ENCODE measurements at regions of chr4 and their contacts with region 1.

Region 1: DNA sequence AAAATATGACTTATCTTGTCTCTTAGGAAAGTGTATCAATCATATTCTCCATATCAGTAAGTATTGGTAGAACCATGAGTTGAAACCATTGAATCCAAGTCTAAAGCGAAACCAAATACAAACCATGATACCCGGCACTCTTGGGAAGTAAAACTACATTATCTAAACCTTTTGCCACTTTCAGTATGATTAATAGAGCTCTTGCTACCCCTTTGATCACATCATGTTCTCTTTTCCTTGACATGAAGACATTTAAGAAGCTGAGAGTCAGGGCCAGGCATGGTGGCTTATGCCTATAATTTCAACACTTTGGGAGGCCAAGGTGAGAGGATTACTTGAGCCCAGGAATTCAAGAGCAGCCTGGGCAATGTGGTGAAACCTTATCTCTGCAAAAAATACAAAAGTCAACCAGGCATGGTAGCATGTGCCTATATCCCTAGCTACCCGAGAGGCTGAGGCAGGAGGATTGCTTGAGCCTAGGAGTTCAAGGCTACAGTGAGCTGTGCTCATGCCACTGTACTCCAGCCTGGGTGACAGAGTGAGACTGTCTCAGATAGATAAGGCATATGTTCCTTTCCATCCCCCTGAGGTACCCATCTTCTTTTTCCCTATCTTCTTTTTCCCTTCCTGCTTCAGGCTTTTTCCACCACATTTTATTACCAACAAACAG is 45.4 kb downstream of the CEP135 start:
- DNase-seq: peak; percentile 36
- H3K4me3 Mint-ChIP-seq: no peak overlapping the region
- H3K27ac Mint-ChIP-seq: peak overlapping the region; percentile 41
- H3K4me1 Mint-ChIP-seq: peaks cover 33% of the 10 kb centered on the region
- H3K27me3 Mint-ChIP-seq: no peaks in the 10 kb centered on the region

Region 2: DNA sequence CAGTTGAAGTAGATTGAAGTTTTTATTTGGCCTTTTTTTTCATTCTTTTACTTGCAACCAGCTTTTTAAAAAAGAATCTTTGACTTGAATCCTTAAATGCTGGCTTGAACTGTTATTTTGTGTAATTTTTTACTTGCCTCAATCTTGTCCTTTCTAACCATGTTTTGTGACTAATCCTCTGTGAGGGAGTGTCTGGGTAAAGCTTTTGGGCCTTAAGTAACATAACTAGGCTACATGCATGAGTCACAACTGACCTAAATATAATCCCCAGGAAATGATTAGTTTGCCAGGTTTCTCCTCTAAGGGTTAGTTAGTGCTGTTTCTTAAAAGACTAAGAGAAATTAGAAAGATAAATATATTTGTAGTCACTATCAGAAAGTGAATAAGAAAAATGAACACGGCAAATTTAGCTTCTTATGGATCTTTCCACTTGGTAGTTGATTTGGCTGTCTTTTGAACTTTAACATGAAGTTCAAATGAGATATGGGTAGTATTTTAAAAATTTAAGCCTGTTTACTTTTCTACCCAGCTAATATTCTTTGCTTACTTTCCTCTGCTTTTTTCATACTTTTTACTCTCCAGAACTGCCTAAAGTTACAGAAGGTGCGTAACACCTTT is 127.7 kb before region 1 on chr4:
- CTCF ChIA-PET with region 1: no interaction called
- intact Hi-C with region 1: no loop called
- DNase-seq: no peak
- H3K4me3 Mint-ChIP-seq: no peak overlapping the region
- H3K27ac Mint-ChIP-seq: peak overlapping the region; percentile 78
- H3K4me1 Mint-ChIP-seq: peaks cover 16% of the 10 kb centered on the region
- H3K27me3 Mint-ChIP-seq: no peaks in the 10 kb centered on the region

Region 3: DNA sequence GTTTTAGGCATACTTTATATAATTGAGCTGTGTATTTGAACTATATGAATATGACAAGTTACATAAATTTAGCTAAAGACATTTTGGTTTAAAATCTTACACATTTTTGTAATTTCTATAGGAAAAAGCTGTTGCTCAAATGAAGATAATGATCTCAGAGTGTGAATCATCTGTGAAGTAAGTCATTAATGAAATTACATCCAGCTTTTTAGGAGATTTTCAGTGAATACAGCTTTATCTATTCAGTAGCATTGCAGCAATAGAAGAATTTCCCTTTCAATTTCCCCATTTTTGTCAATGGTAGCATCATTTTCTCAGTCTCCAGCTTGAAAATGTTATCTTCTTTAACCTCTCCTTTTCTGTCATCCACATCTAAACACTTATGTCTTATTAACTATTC is 14.1 kb after region 1 on chr4:
- CTCF ChIA-PET with region 1: interaction called, 5 read pairs
- intact Hi-C with region 1: loop called (anchors 1 kb)
- DNase-seq: no peak
- H3K4me3 Mint-ChIP-seq: no peak overlapping the region
- H3K27ac Mint-ChIP-seq: no peak overlapping the region
- H3K4me1 Mint-ChIP-seq: peaks cover 10% of the 10 kb centered on the region
- H3K27me3 Mint-ChIP-seq: no peaks in the 10 kb centered on the region

Region 4: DNA sequence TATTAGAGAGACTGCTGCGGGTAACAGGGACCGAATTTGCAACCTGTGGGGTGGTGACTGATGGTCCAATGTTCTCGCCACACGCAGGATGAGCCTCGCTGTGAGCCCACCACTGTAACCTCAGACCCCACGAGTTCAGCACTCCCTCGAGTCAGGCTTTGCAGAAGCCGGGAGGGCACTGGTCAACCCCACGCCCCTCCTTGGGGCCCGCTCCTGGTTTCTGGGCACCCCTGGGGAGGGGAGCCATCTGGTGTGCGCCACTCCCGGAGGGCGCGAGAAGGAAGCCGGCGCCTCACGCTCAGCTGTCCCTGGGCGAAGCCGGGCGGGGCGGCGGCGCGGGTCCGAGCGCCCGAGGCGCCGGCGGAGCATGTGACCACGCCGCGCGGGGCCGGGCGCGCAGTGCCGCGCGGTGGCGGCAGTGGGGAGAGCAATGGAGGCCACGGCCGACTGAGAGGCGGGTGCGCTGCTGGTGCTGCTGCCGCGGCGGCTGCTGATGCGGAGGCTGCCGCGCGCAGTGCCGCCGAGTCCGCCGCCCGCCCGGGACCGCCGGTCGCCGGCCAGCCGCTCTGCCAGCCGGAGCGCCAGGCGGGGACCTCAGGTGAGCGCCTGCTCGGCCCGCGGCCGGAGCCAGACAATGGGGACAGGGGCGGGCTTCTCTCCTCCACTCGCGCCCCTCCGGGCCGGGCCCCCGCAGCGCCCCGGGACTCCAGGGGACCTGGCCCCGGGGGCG is 54.7 kb after region 1 on chr4:
- CTCF ChIA-PET with region 1: no interaction called
- intact Hi-C with region 1: loop called (anchors 2 kb)
- DNase-seq: peak; percentile 66
- H3K4me3 Mint-ChIP-seq: peak overlapping the region; percentile 70
- H3K27ac Mint-ChIP-seq: no peak overlapping the region
- H3K4me1 Mint-ChIP-seq: peaks cover 9% of the 10 kb centered on the region
- H3K27me3 Mint-ChIP-seq: peaks cover 46% of the 10 kb centered on the region

Region 5: GRCh38 chr4:56129431-56129861 is 135.3 kb after region 1 on chr4:
- CTCF ChIA-PET with region 1: no interaction called
- intact Hi-C with region 1: no loop called
- DNase-seq: peak; percentile 47
- H3K4me3 Mint-ChIP-seq: no peak overlapping the region
- H3K27ac Mint-ChIP-seq: no peak overlapping the region
- H3K4me1 Mint-ChIP-seq: no peaks in the 10 kb centered on the region
- H3K27me3 Mint-ChIP-seq: peaks cover 2% of the 10 kb centered on the region

Measured in activated naive CD4-positive, alpha-beta T cell treated with anti-CD3 and anti-CD28 coated beads for 36 hours (primary cell).